ENCODE measurements at regions of chr13 and their contacts with region 1.

Region 1: DNA sequence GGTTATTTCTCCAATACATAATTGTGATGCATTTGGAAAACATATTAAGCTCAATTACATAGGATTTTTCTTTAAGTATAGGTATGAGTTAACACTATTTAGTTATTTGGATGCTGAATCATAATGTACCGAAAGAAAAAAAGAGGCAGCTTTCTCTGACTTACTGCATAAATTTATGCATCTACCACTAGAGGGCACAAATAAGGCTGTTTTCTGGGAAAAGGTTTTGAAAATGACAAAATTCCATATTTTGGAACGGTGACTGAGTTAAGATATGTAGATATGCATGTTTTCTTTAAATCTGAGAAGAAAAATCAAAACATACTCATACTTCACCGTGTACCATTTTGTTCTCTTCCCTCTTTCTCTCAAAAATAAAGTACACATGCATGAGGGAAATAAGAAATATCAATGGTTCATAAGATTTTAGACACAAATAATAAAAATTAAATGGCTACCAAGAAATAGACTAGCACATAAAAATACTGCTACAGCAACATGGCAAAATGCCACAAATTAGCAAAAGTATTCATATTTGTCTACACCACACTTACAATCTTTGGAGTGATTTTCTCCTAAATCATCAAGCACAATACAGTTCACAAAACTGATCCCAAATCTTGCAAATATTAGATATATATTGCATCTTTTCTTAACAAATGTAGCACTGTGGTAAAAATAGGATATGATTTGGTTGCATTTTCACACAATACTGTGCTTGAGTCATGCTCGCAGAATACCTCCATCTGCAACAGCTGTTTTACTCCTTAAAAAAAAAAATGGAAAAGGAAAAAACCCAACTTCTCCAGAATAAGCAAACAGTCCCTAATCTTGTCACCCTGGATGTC is 260.0 kb downstream of the FGF14 start:
- DNase-seq: no peak
- H3K4me3 ChIP-seq: no peak overlapping the region
- H3K27ac ChIP-seq: peak overlapping the region in 28 of 59 donors; percentile 3 to 75 (median 39)
- H3K27me3 ChIP-seq: no peaks in the 10 kb centered on the region
- CTCF ChIP-seq: peak; percentile 51 to 91 (median 77)

Region 2: DNA sequence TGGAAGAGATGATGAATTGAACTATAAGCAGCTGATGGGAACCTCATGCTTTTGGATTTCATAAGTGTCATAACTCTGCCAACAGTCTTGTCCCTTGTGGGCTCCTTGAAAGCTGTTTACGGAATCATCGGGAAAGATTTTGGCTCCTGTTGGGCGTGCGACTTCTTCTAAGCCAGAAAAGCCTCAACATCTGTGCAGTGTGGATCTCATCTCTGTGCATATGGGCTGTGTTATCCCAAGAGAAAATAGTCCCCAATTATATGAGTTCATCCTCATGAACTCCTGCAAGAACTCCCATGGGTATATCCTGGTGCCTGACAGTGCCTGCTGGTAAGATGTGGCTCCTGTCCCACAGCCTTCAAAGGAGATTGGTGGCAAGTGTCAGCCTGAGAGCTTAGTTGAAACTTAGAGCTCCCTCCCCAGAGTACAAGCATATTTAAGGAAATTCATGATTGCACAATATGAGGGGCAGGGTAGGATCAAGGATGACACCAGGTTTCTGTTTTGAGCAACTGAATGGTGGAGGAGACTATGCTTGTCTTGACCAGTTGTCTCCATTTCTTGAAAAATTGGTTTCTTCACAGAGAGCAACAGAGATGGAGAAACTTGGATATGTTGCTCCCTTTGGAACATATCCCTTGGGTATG is 445.9 kb before region 1 on chr13:
- intact Hi-C with region 1: no loop called
- DNase-seq: no peak
- H3K4me3 ChIP-seq: no peak overlapping the region
- H3K27ac ChIP-seq: no peak overlapping the region
- H3K27me3 ChIP-seq: no peaks in the 10 kb centered on the region
- CTCF ChIP-seq: no peak

Region 3: GRCh38 chr13:102402290-102402689 is 260.4 kb after region 1 on chr13:
- intact Hi-C with region 1: loop called (anchors 5 kb)
- DNase-seq: peak; percentile 22 to 87 (median 76)
- H3K4me3 ChIP-seq: peak overlapping the region; percentile 41 to 98 (median 69)
- H3K27ac ChIP-seq: peak overlapping the region in 54 of 59 donors; percentile 12 to 93 (median 82)
- H3K27me3 ChIP-seq: peaks cover 0 to 26% (median 0%) of the 10 kb centered on the region in 45 donors
- CTCF ChIP-seq: peak in 11 of 56 donors; percentile 8 to 34 (median 16)

Region 4: GRCh38 chr13:102460801-102461200 is 319.0 kb after region 1 on chr13:
- intact Hi-C with region 1: loop called in 1 of 2 experiments (anchors 5 kb)
- DNase-seq: no peak
- H3K4me3 ChIP-seq: no peak overlapping the region
- H3K27ac ChIP-seq: no peak overlapping the region
- H3K27me3 ChIP-seq: peaks cover 0 to 7% (median 0%) of the 10 kb centered on the region in 45 donors
- CTCF ChIP-seq: no peak

Region 5: GRCh38 chr13:102555917-102556553 is 414.2 kb after region 1 on chr13:
- intact Hi-C with region 1: loop called in 1 of 2 experiments (anchors 10 kb)
- DNase-seq: peak in 1 of 10 donors; percentile 14
- H3K4me3 ChIP-seq: peak overlapping the region in 5 of 59 donors; percentile 1 to 17 (median 8)
- H3K27ac ChIP-seq: no peak overlapping the region
- H3K27me3 ChIP-seq: no peaks in the 10 kb centered on the region
- CTCF ChIP-seq: peak in 55 of 56 donors; percentile 31 to 80 (median 62)